ENCODE measurements at regions of chr2 and their contacts with region 1.

Region 1: GRCh38 chr2:208254871-208255556 is at the start of gene IDH1:
- DNase-seq: peak; percentile 97
- ATAC-seq: peak; percentile 80
- H3K4me3 Mint-ChIP-seq: peak within 1 kb of the TSS; percentile 85
- H3K27ac Mint-ChIP-seq: peak within 1 kb of the TSS; percentile 42
- H3K4me1 Mint-ChIP-seq: peaks cover 18% of the 10 kb centered on the region
- H3K27me3 Mint-ChIP-seq: no peaks in the 10 kb centered on the region
- total RNA-seq, gene IDH1: 21.1 to 23.7 TPM

Region 2: GRCh38 chr2:207710814-207711740 is 543.9 kb before region 1 on chr2 and contains the start of gene CCNYL1:
- CTCF ChIA-PET with region 1: no interaction called
- POLR2A ChIA-PET with region 1: no interaction called
- intact Hi-C with region 1: loop called in 1 of 2 experiments (anchors 1 kb)
- DNase-seq: peak; percentile 99
- ATAC-seq: peak; percentile 99
- H3K4me3 Mint-ChIP-seq: peak within 1 kb of the TSS; percentile 83
- H3K27ac Mint-ChIP-seq: peak within 1 kb of the TSS; percentile 88
- H3K4me1 Mint-ChIP-seq: peaks cover 25% of the 10 kb centered on the region
- H3K27me3 Mint-ChIP-seq: no peaks in the 10 kb centered on the region
- total RNA-seq, gene CCNYL1: 4.0 to 5.5 TPM

Region 3: DNA sequence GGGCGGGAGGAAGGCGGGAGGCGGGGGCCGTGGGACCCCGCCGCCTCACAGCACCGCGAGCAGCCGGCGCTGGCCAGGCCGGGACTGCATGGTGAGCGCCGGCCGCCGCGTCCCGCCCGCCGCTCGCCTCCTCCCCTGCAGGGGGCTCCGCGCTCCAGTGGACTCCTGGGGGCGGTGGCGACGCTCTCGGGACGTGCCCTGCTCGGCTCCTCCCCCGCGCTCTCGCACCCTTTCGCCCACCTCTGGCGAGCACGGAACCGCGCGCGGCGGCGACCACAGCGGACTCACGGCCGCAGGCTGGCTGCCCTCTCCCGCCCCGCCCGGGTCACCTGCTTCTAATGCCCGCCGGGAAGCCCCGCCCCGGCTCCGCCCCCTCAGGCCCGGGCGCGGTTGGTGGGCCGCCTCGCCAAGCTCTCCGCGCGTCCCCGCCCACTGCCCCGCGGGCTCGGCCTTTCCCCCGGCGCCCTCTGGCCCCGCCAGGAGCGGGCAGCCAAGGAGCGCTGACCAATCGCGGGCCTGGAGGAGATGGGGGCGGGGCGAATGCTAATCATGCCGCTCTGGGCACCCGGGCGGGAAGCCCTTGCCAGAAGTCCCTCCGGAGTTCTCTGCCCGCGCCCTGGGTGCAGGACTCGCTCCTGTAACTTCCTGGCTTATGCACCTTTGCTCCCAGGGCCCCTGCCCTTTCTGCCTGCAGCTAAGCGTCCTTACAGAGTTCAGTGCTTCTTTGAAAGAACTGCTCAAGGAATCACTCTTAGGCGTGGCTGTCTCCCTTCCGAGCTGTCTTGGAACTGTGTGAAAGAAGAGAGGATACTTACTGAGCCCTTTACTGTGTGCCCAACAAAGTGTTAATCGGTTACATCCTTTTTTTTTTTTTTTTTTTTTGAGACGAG is 485.2 kb before region 1 on chr2 and contains the start of gene FZD5:
- CTCF ChIA-PET with region 1: no interaction called
- POLR2A ChIA-PET with region 1: no interaction called
- intact Hi-C with region 1: loop called in 1 of 2 experiments (anchors 5 kb)
- DNase-seq: peak; percentile 90
- ATAC-seq: peak; percentile 83
- H3K4me3 Mint-ChIP-seq: peak within 1 kb of the TSS; percentile 79
- H3K27ac Mint-ChIP-seq: no peak within 1 kb of the TSS
- H3K4me1 Mint-ChIP-seq: peaks cover 27% of the 10 kb centered on the region
- H3K27me3 Mint-ChIP-seq: peaks cover 41% of the 10 kb centered on the region
- total RNA-seq, gene FZD5: 1.1 to 1.3 TPM

Region 4: DNA sequence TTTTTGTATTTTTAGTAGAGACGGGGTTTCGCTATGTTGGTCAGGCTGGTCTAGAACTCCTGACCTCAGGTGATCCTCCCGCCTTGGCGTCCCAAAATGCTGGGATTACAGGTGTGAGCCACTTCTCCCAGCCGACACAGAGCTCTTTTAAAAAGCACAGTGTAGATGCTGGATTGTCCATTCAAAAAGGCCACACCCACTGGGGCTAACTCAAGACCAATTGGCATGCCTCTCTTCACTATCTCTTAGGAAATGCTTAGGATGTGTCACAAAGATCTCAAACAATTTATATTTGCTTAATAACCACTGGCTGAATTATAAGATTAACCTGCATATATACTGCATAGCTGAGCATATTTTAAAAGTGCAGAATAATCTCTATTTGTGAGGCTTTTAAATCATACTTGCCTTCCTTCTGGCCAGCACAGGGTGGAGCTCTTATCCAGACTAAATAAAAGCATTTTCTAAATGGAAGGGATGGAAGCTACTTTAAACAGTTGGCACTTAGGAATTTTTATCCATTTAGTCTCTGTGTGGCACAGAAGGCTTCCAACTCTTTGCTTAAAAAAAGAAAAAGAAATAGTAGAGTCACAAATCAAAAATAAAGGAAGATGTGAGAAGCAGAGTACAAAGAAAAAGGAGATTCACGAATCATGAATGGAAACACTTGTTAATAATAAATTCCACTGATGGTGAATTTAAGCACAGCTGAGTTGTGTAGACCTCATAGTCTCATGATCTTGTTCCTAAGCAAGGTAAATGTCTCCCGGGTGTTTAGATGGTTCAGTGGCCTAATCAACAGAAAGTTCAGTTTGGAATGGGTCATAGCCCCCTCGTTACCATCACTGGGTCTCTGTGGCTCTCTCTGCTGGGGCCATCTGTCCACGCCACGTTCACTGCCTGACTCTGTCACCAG is 153.0 kb before region 1 on chr2:
- CTCF ChIA-PET with region 1: no interaction called
- POLR2A ChIA-PET with region 1: no interaction called
- intact Hi-C with region 1: loop called (anchors 2 kb)
- DNase-seq: no peak
- ATAC-seq: peak; percentile 35
- H3K4me3 Mint-ChIP-seq: no peak overlapping the region
- H3K27ac Mint-ChIP-seq: no peak overlapping the region
- H3K4me1 Mint-ChIP-seq: peaks cover 25% of the 10 kb centered on the region
- H3K27me3 Mint-ChIP-seq: no peaks in the 10 kb centered on the region

Region 5: GRCh38 chr2:208175069-208175839 is 79.8 kb before region 1 on chr2:
- CTCF ChIA-PET with region 1: interaction called, 21 read pairs
- POLR2A ChIA-PET with region 1: interaction called, 3 read pairs
- intact Hi-C with region 1: loop called (anchors 1 to 2 kb)
- DNase-seq: peak; percentile 76
- ATAC-seq: peak; percentile 99
- H3K4me3 Mint-ChIP-seq: no peak overlapping the region
- H3K27ac Mint-ChIP-seq: no peak overlapping the region
- H3K4me1 Mint-ChIP-seq: peaks cover 4% of the 10 kb centered on the region
- H3K27me3 Mint-ChIP-seq: no peaks in the 10 kb centered on the region

Region 6: DNA sequence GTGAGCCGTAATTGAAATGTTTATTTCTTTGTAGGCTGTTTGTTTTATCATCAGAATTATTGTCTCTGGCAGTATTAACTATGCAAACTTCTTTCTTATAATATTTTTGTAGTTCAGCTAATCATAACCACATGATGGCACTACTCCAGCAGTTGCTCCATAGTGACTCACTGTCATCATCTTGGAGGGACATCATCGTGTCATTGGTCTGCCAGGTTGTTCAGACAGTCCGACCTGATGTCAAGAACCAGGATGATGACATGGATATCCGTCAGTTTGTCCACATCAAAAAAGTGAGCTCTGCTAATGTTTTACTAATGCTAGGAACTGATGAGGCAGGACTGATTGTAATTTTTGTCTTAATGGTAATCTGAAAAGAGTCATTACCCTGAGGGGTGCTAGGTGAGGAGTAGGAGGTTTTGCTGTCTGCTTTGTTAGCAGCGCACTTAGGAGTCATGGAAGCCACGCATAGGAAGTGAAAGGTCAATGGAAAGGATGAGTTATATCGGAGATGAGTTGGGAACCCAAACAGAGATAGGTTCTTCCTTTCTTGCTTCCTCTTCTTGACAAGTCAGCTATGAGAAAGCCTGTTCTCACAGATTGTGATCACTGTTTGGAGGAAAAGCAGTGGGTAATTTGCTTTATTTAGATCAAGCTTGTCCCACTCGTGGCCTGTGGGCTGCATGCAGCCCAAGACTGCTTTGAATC is 60.2 kb after region 1 on chr2:
- CTCF ChIA-PET with region 1: no interaction called
- POLR2A ChIA-PET with region 1: no interaction called
- intact Hi-C with region 1: loop called in 1 of 2 experiments (anchors 5 kb)
- DNase-seq: no peak
- ATAC-seq: peak; percentile 64
- H3K4me3 Mint-ChIP-seq: no peak overlapping the region
- H3K27ac Mint-ChIP-seq: peak overlapping the region; percentile 44
- H3K4me1 Mint-ChIP-seq: peaks cover 29% of the 10 kb centered on the region
- H3K27me3 Mint-ChIP-seq: no peaks in the 10 kb centered on the region

Region 7: GRCh38 chr2:209208211-209208610 is 953.2 kb after region 1 on chr2:
- CTCF ChIA-PET with region 1: no interaction called
- POLR2A ChIA-PET with region 1: no interaction called
- intact Hi-C with region 1: loop called in 1 of 2 experiments (anchors 5 kb)
- DNase-seq: peak; percentile 58
- ATAC-seq: no peak
- H3K4me3 Mint-ChIP-seq: peak overlapping the region; percentile 19
- H3K27ac Mint-ChIP-seq: no peak overlapping the region
- H3K4me1 Mint-ChIP-seq: no peaks in the 10 kb centered on the region
- H3K27me3 Mint-ChIP-seq: no peaks in the 10 kb centered on the region